Mucosa of descending colon (tissue), 3 donors: ENCODE measurements at regions of chr2 and their contacts with region 1.

Region 1: DNA sequence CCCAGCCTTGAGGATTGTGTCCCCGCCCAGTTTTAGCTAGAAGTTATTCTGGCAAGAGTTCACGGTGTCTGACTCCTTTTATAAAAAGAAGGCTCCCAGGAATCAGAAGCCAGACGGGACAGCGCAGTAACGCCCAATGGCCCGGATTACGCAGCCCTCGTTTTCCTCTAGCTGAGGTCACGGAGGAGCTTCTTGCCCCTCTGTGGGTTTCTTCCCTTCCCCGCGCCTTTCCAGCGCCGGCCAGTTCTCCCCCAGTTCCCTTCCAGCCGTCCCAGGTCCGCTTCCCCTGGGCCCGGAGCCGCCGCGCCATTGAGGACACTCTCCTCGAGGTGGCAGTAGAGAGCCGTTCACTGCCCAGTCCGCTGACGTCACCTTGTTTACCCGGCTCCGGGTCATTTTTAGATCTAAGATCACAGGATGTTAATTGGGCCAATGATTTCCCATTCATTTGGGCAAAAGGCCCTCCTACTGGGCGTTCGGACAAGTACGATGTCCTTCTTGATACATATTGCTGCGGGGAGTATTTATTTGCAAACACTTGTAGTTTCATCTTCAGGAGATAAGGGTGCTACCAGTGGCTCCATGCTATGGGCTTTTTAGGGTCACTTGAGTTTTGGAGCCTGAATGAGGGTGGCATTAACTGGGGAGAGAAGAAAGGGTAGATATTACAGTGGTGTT is 81.5 kb upstream of the PPM1B start:
- DNase-seq: peak; percentile 88 to 94 (median 93)
- ATAC-seq: peak; percentile 98
- H3K4me3 ChIP-seq: no peak overlapping the region
- H3K4me1 ChIP-seq: no peaks in the 10 kb centered on the region
- CTCF ChIP-seq: peak; percentile 93

Region 2: GRCh38 chr2:43854671-43855070 is 232.5 kb before region 1 on chr2:
- intact Hi-C with region 1: no loop called
- DNase-seq: no peak
- ATAC-seq: no peak
- H3K4me3 ChIP-seq: no peak overlapping the region
- H3K4me1 ChIP-seq: no peaks in the 10 kb centered on the region
- CTCF ChIP-seq: no peak

Region 3: GRCh38 chr2:44244129-44244871 is 157.1 kb after region 1 on chr2:
- intact Hi-C with region 1: loop called in 1 of 2 experiments (anchors 10 kb)
- DNase-seq: peak in 2 of 3 donors; percentile 45 to 63
- ATAC-seq: peak; percentile 78
- H3K4me3 ChIP-seq: no peak overlapping the region
- H3K4me1 ChIP-seq: peaks cover 9% of the 10 kb centered on the region
- CTCF ChIP-seq: peak; percentile 43

Region 4: GRCh38 chr2:44305882-44306281 is 218.7 kb after region 1 on chr2:
- intact Hi-C with region 1: no loop called
- DNase-seq: no peak
- ATAC-seq: no peak
- H3K4me3 ChIP-seq: no peak overlapping the region
- H3K4me1 ChIP-seq: no peaks in the 10 kb centered on the region
- CTCF ChIP-seq: no peak